ENCODE measurements at regions of chr5 and their contacts with region 1.

Region 1: GRCh38 chr5:141398608-141399007 is 861 bp downstream of the PCDHGB5 start:
- DNase-seq: no peak
- H3K4me3 Mint-ChIP-seq: no peak overlapping the region
- H3K27ac Mint-ChIP-seq: no peak overlapping the region
- H3K4me1 Mint-ChIP-seq: no peaks in the 10 kb centered on the region
- H3K27me3 Mint-ChIP-seq: peaks cover 27% of the 10 kb centered on the region

Region 2: DNA sequence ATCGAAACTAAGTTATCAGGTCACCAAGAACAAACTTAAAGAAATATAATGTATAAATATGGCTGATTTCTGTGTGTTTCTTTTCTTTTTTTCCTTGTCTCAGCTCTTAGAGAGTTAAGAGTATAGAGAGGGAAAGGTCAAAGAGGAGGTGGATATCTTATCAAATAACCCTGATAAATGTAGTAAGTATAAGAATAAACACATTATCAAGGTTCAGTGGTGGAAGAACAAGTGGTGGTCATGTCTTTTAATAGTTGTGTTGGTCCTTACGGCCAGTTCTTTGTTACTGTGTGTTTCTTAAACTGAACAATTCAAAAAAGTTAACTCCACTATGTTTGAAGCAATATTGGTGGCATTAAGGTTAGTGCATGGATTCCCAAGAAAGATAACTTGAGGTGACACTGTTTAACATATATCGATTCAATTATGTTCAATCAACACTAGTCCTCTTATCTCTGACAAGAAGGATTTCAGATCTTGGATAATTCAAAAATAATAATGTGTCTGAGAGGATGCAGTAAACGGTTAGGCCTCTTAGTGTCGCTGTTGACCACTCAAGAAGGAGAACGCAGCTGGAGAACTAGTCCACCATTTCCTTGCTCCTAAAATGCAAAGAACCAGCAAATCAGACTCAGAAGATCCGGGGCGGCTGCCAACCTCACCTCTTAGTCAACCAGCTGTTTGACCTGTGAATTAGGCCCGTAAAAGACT is 55.2 kb before region 1 on chr5 and contains the start of gene PCDHGA3:
- intact Hi-C with region 1: no loop called
- DNase-seq: no peak
- H3K4me3 Mint-ChIP-seq: peak within 1 kb of the TSS; percentile 75
- H3K27ac Mint-ChIP-seq: no peak within 1 kb of the TSS
- H3K4me1 Mint-ChIP-seq: no peaks in the 10 kb centered on the region
- H3K27me3 Mint-ChIP-seq: peaks cover 15% of the 10 kb centered on the region
- total RNA-seq, gene PCDHGA3: 0.10 TPM in 1 of 2 replicates, not detected in the other

Region 3: GRCh38 chr5:141359790-141360426 is 38.7 kb before region 1 on chr5 and contains the start of gene PCDHGB2:
- intact Hi-C with region 1: loop called (anchors 5 kb)
- DNase-seq: no peak
- H3K4me3 Mint-ChIP-seq: peak within 1 kb of the TSS; percentile 85
- H3K27ac Mint-ChIP-seq: peak within 1 kb of the TSS; percentile 68
- H3K4me1 Mint-ChIP-seq: peaks cover 6% of the 10 kb centered on the region
- H3K27me3 Mint-ChIP-seq: peaks cover 19% of the 10 kb centered on the region
- total RNA-seq, gene PCDHGB2: 0.47 and 0.93 TPM in 2 replicates

Region 4: DNA sequence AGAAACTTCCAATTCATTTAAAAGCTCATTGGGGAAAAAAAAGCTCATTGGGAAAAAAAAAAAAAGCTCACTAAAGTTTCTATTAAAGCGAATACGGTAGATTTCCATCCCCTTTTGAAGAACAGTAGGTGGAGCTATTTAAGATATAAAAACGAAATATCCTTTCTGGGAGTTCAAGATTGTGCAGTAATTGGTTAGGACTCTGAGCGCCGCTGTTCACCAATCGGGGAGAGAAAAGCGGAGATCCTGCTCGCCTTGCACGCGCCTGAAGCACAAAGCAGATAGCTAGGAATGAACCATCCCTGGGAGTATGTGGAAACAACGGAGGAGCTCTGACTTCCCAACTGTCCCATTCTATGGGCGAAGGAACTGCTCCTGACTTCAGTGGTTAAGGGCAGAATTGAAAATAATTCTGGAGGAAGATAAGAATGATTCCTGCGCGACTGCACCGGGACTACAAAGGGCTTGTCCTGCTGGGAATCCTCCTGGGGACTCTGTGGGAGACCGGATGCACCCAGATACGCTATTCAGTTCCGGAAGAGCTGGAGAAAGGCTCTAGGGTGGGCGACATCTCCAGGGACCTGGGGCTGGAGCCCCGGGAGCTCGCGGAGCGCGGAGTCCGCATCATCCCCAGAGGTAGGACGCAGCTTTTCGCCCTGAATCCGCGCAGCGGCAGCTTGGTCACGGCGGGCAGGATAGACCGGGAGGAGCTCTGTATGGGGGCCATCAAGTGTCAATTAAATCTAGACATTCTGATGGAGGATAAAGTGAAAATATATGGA is 31.9 kb after region 1 on chr5 and contains the start of gene PCDHGA12:
- intact Hi-C with region 1: loop called (anchors 2 kb)
- DNase-seq: no peak
- H3K4me3 Mint-ChIP-seq: peak within 1 kb of the TSS; percentile 73
- H3K27ac Mint-ChIP-seq: peak within 1 kb of the TSS; percentile 67
- H3K4me1 Mint-ChIP-seq: no peaks in the 10 kb centered on the region
- H3K27me3 Mint-ChIP-seq: peaks cover 17% of the 10 kb centered on the region
- total RNA-seq, gene PCDHGA12: 0.18 TPM in 1 of 2 replicates, not detected in the other